PC-9 (cell line): ENCODE measurements at regions of chr20 and their contacts with region 1.

Region 1: DNA sequence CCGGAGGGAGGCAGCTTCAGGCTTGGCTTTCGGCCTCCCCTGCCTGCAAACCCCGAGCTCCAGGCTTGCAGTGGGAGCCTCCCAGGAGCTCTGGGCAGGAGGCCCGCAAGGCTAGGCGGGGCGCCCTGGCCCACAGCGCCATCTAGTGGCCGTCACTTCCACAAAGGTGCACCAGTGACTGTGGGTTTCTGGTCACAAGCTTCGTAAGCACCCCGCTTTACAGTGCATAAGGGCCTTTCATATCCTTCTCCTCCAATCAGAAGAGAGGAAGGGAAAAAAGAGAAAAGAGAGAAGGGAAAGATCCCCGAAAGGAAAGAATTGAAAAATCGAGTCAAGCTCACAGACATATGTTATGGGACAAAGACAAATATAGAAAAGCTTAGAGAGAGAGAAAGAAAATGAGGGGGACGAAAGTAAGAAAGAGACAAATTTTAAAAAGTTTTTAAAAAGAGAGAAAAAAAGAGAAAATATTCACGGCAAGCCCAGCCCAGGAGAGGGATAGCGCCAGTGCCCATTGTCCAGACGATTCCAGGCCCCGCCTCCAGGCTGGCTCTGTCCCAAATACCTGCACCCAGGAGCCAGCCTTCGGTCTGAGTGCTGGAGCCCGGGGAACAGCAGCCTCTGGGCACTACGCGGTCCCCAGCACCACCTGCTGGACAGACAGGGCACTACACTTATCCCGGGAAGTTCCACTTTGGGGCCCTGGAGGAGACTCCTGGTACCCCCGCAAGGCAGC is 207.1 kb downstream of the PREX1 start:
- DNase-seq: peak; percentile 95 to 96
- H3K4me3 ChIP-seq: peak overlapping the region; percentile 54
- H3K27ac ChIP-seq: peak overlapping the region; percentile 94
- H3K4me1 ChIP-seq: peaks cover 38% of the 10 kb centered on the region
- H3K27me3 ChIP-seq: no peaks in the 10 kb centered on the region
- CTCF ChIP-seq: peak; percentile 90

Region 2: DNA sequence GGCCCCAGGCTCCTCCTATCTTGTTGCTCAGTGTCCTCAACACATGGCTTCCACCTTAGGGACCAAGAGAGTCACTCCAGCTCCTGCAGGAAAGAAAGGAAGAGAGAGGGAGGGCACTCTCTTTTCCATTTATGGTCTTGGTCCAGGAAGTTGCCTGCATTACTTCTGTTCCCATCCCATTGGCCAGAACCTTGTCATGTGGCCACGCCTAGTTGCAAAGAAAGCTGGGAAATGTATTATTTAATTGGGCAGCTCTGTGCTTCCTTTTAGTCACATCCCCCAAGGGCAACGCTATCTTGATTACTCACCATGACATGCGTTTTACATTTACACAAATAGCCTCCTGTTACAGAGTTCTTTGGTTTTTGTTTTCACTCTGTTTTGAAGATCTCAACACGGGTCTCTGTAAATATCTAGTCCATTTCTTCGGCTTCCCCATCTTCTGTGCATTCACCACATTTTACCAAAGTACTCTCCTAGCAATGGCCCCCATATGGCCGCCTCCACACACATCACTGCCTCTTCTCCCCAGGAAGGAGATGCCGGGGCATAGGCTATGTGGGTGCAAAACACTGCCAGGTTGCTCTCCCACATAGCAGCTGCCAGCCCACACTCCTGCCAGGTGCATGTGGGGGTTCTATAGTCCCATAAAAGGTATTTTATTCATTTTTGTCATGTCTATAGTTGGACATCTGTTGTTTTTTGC is 1228.5 kb before region 1 on chr20:
- CTCF ChIA-PET with region 1: no interaction called
- POLR2A ChIA-PET with region 1: no interaction called
- intact Hi-C with region 1: loop called (anchors 10 kb)
- DNase-seq: peak; percentile 80 to 100
- H3K4me3 ChIP-seq: peak overlapping the region; percentile 33; the same call in 1 of the 2 replicates
- H3K27ac ChIP-seq: peak overlapping the region; percentile 99
- H3K4me1 ChIP-seq: peaks cover 64% of the 10 kb centered on the region
- H3K27me3 ChIP-seq: no peaks in the 10 kb centered on the region
- CTCF ChIP-seq: no peak

Region 3: DNA sequence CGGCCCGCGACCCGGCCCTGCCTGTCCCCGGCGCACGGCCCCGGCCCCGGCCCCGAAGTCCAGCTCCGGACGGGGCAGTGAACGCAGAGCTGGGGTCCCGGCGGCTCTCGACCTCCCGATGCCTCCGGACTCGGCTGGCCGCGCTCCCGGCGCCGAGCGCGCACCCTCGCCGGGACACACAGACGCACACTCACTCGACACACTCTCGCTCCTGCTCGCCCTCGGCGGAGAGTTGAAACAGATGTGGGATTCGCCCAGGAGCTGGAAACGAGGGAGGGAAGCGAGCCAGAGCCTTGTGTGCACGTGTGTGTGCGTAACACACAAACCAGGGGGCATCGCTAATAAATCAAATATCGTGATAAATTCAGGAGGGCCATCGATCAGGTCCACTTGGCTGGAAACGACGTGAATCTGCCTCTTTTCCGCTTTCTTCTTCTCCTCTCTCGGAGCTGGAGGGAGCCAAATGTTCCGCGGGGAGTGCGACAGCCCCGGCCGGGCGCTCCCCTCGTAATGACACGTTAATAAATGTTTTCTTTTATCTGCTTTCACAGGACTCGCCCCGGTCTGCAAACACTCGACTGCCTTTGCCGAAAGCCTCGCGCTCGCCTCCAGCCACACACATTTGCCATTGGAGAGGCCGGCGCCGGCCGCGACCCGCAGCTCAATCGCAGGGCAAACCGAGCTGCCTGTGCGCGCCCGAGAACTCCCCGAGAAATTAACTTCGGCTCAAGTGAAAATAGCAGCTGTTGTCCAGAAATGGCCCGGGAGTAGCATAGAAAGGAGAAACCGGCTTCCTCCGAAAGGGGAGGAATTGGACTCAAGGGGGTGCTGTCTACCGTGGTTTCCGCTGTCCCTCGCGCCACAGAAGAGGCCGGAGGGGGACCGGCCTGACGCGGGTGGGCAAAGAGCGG is 834.6 kb before region 1 on chr20:
- CTCF ChIA-PET with region 1: interaction called, 7 read pairs
- POLR2A ChIA-PET with region 1: interaction called, 9 read pairs
- intact Hi-C with region 1: loop called (anchors 1 kb)
- DNase-seq: peak; percentile 77 to 87
- H3K4me3 ChIP-seq: peak overlapping the region; percentile 84
- H3K27ac ChIP-seq: peak overlapping the region; percentile 94
- H3K4me1 ChIP-seq: peaks cover 67% of the 10 kb centered on the region
- H3K27me3 ChIP-seq: no peaks in the 10 kb centered on the region
- CTCF ChIP-seq: peak; percentile 88

Region 4: GRCh38 chr20:48051794-48052474 is 568.8 kb before region 1 on chr20:
- CTCF ChIA-PET with region 1: no interaction called
- POLR2A ChIA-PET with region 1: interaction called, 8 read pairs
- intact Hi-C with region 1: loop called (anchors 2 kb)
- DNase-seq: peak; percentile 78 to 87
- H3K4me3 ChIP-seq: no peak overlapping the region
- H3K27ac ChIP-seq: peak overlapping the region; percentile 52
- H3K4me1 ChIP-seq: peaks cover 22% of the 10 kb centered on the region
- H3K27me3 ChIP-seq: no peaks in the 10 kb centered on the region
- CTCF ChIP-seq: no peak

Region 5: GRCh38 chr20:48215291-48215928 is 405.3 kb before region 1 on chr20:
- CTCF ChIA-PET with region 1: no interaction called
- POLR2A ChIA-PET with region 1: no interaction called
- intact Hi-C with region 1: loop called (anchors 1 kb)
- DNase-seq: peak; percentile 55 to 58
- H3K4me3 ChIP-seq: no peak overlapping the region
- H3K27ac ChIP-seq: peak overlapping the region; percentile 92
- H3K4me1 ChIP-seq: peaks cover 51% of the 10 kb centered on the region
- H3K27me3 ChIP-seq: no peaks in the 10 kb centered on the region
- CTCF ChIP-seq: no peak

Region 6: GRCh38 chr20:48489656-48490055 is 131.0 kb before region 1 on chr20:
- CTCF ChIA-PET with region 1: no interaction called
- POLR2A ChIA-PET with region 1: no interaction called
- intact Hi-C with region 1: loop called (anchors 2 kb)
- DNase-seq: no peak
- H3K4me3 ChIP-seq: no peak overlapping the region
- H3K27ac ChIP-seq: no peak overlapping the region
- H3K4me1 ChIP-seq: peaks cover 28% of the 10 kb centered on the region
- H3K27me3 ChIP-seq: no peaks in the 10 kb centered on the region
- CTCF ChIP-seq: no peak

Region 7: DNA sequence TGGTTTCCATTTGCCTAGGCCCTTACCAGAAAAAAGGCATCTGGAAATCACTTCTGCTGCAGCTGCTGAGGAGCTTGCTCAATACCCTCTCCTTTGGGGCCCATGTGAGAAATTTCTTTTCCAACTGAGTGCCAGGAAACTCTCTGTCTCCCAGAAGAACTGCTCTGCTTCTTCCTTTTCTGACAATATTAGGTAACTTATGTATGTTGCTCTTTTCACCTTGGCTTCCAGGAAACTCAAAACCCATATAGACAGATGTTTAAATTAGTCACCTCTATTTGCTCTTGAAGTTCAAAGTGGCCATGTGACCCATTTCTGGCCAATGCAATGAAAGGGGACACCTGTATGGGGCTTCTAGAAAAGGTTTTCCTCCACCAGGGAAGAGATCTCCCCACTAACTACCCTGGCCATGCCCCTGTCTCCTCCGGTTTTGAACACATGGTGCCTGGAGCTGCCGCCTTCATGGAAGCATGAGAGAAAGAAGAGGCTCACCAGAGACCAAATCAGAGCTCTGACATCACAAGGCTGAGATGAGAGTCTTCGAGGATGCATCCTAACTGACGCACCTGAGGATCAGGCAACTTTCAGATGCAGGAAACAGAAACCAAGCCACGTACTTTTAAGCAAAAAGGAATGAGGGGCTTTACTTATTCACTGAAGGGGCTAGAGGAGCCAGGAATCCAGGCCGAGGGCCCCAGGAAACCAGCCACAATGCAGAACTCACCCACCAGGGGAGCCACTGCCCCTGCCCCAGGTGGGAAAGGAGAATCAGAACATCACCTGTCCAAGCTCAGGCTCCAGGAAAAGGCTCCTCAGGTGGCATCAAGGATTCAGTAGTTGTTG is 85.7 kb after region 1 on chr20:
- CTCF ChIA-PET with region 1: no interaction called
- POLR2A ChIA-PET with region 1: no interaction called
- intact Hi-C with region 1: no loop called
- DNase-seq: no peak
- H3K4me3 ChIP-seq: no peak overlapping the region
- H3K27ac ChIP-seq: no peak overlapping the region
- H3K4me1 ChIP-seq: peaks cover 7% of the 10 kb centered on the region; the same call in 1 of the 2 replicates
- H3K27me3 ChIP-seq: no peaks in the 10 kb centered on the region
- CTCF ChIP-seq: no peak

Region 8: GRCh38 chr20:49179368-49180277 is 558.9 kb after region 1 on chr20:
- CTCF ChIA-PET with region 1: no interaction called
- POLR2A ChIA-PET with region 1: no interaction called
- intact Hi-C with region 1: no loop called
- DNase-seq: peak in 1 of 2 experiments; percentile 77
- H3K4me3 ChIP-seq: peak overlapping the region; percentile 23; the same call in 1 of the 2 replicates
- H3K27ac ChIP-seq: peak overlapping the region; percentile 61
- H3K4me1 ChIP-seq: peaks cover 25% of the 10 kb centered on the region
- H3K27me3 ChIP-seq: no peaks in the 10 kb centered on the region
- CTCF ChIP-seq: no peak